Panc1 (cell line): ENCODE measurements at regions of chr6 and their contacts with region 1.

Region 1: GRCh38 chr6:35786810-35787209 is 6.0 kb downstream of the CLPSL1 start:
- DNase-seq: no peak
- ATAC-seq: peak; percentile 55; the same call in 1 of the 2 replicates
- H3K4me3 ChIP-seq: peak overlapping the region in 1 of 2 experiments; percentile 7; a peak in 1 of 4 replicates
- H3K27ac ChIP-seq: no peak overlapping the region
- H3K4me1 ChIP-seq: peaks cover 3% of the 10 kb centered on the region
- H3K27me3 ChIP-seq: peaks cover 8% of the 10 kb centered on the region
- CTCF ChIP-seq: no peak

Region 2: GRCh38 chr6:35259194-35259947 is 527.4 kb before region 1 on chr6 and contains the start of gene ZNF76:
- CTCF ChIA-PET with region 1: no interaction called
- POLR2A ChIA-PET with region 1: no interaction called
- in situ Hi-C with region 1: no loop called
- intact Hi-C with region 1: no loop called
- DNase-seq: peak; percentile 72
- ATAC-seq: peak; percentile 98
- H3K4me3 ChIP-seq: peak within 1 kb of the TSS; percentile 74 to 82
- H3K27ac ChIP-seq: peak within 1 kb of the TSS; percentile 99
- H3K4me1 ChIP-seq: peaks cover 20% of the 10 kb centered on the region
- H3K27me3 ChIP-seq: no peaks in the 10 kb centered on the region
- CTCF ChIP-seq: no peak
- total RNA-seq, gene ZNF76: 41.5 TPM

Region 3: GRCh38 chr6:35765739-35766138 is 21.1 kb before region 1 on chr6:
- CTCF ChIA-PET with region 1: no interaction called
- POLR2A ChIA-PET with region 1: no interaction called
- in situ Hi-C with region 1: no loop called
- intact Hi-C with region 1: no loop called
- DNase-seq: no peak
- ATAC-seq: no peak
- H3K4me3 ChIP-seq: no peak overlapping the region
- H3K27ac ChIP-seq: no peak overlapping the region
- H3K4me1 ChIP-seq: no peaks in the 10 kb centered on the region
- H3K27me3 ChIP-seq: peaks cover 9% of the 10 kb centered on the region
- CTCF ChIP-seq: no peak

Region 4: GRCh38 chr6:35797837-35798526 is 11.2 kb after region 1 on chr6:
- CTCF ChIA-PET with region 1: interaction called, 3 read pairs
- POLR2A ChIA-PET with region 1: no interaction called
- in situ Hi-C with region 1: no loop called
- intact Hi-C with region 1: loop called (anchors 1 kb)
- DNase-seq: no peak
- ATAC-seq: no peak
- H3K4me3 ChIP-seq: no peak overlapping the region
- H3K27ac ChIP-seq: no peak overlapping the region
- H3K4me1 ChIP-seq: no peaks in the 10 kb centered on the region
- H3K27me3 ChIP-seq: no peaks in the 10 kb centered on the region
- CTCF ChIP-seq: no peak